Activated CD4-positive, alpha-beta memory T cell treated with anti-CD3 and anti-CD28 coated beads for 36 hours (primary cell): ENCODE measurements at regions of chr1 and their contacts with region 1.

Region 1: GRCh38 chr1:38848071-38848470 is 11.5 kb downstream of the RRAGC start:
- DNase-seq: no peak
- H3K4me3 Mint-ChIP-seq: no peak overlapping the region
- H3K27ac Mint-ChIP-seq: no peak overlapping the region
- H3K4me1 Mint-ChIP-seq: peaks cover 31% of the 10 kb centered on the region
- H3K27me3 Mint-ChIP-seq: no peaks in the 10 kb centered on the region

Region 2: GRCh38 chr1:38285807-38286530 is 562.1 kb before region 1 on chr1:
- CTCF ChIA-PET with region 1: no interaction called
- POLR2A ChIA-PET with region 1: no interaction called
- intact Hi-C with region 1: no loop called
- DNase-seq: no peak
- H3K4me3 Mint-ChIP-seq: no peak overlapping the region
- H3K27ac Mint-ChIP-seq: no peak overlapping the region
- H3K4me1 Mint-ChIP-seq: no peaks in the 10 kb centered on the region
- H3K27me3 Mint-ChIP-seq: peaks cover 26% of the 10 kb centered on the region

Region 3: GRCh38 chr1:38932571-38932970 is 84.5 kb after region 1 on chr1:
- CTCF ChIA-PET with region 1: no interaction called
- POLR2A ChIA-PET with region 1: no interaction called
- intact Hi-C with region 1: loop called (anchors 2 kb)
- DNase-seq: peak; percentile 66
- H3K4me3 Mint-ChIP-seq: no peak overlapping the region
- H3K27ac Mint-ChIP-seq: peak overlapping the region; percentile 0
- H3K4me1 Mint-ChIP-seq: peaks cover 21% of the 10 kb centered on the region
- H3K27me3 Mint-ChIP-seq: peaks cover 2% of the 10 kb centered on the region

Region 4: GRCh38 chr1:39034114-39034654 is 186.1 kb after region 1 on chr1:
- CTCF ChIA-PET with region 1: interaction called, 6 read pairs
- POLR2A ChIA-PET with region 1: no interaction called
- intact Hi-C with region 1: loop called (anchors 5 kb)
- DNase-seq: no peak
- H3K4me3 Mint-ChIP-seq: peak overlapping the region; percentile 64
- H3K27ac Mint-ChIP-seq: peak overlapping the region; percentile 80
- H3K4me1 Mint-ChIP-seq: peaks cover 39% of the 10 kb centered on the region
- H3K27me3 Mint-ChIP-seq: no peaks in the 10 kb centered on the region